Naive thymus-derived CD4-positive, alpha-beta T cell (primary cell): ENCODE measurements at regions of chr19 and their contacts with region 1.

Region 1: DNA sequence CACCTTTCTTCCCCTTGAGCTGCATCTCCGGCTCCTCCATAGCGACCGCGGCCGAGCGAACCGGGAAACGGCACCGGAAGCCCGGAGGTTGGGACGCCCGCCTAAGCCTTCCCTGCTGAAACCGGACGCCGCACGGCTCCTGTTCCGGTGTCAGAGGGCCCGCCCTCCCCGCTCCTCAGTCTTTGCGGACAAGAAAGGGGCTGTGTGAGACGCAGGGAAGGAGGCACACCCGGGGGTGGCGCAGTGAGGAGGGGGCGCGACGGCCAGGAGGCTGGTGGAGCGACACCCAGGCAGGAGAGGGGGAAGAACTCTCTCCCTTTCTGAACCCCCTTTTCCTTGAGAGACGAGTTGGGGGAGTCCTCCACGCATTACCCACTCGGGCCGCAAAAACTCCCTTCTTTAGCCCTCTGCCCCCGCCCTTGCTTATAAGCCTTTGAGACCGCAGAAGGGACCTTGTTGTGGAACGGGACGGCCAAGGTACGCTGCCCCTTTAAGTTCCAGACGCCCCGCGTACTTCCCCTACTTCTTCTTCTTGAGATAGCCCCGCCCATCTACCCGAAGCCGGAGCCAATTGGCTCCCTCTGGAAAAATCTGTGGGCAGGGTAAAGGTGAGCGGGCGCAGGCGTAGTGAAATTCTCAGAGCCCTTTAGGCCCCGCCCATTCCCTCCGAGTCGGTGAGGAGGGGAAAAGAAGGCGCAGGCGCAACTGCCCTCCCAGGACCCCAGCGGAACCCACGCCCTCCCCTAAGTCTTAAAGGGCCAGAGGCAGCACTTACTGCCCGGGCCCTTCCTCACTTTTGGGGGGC is at the starts of genes BORCS8 and RFXANK:
- DNase-seq: peak; percentile 89 to 99 (median 99)
- ATAC-seq: peak; percentile 95
- H3K4me3 ChIP-seq: peak within 1 kb of the TSS; percentile 100
- H3K4me3 Mint-ChIP-seq: peak within 1 kb of the TSS; percentile 94 to 100 (median 98)
- H3K27ac ChIP-seq: peak within 1 kb of the TSS; percentile 100
- H3K27ac Mint-ChIP-seq: peak within 1 kb of the TSS; percentile 99 to 100 (median 99)
- H3K4me1 ChIP-seq: peaks cover 13 to 22% of the 10 kb centered on the region in 2 donors
- H3K4me1 Mint-ChIP-seq: peaks cover 23 to 68% (median 45%) of the 10 kb centered on the region in 7 donors
- H3K27me3 ChIP-seq: no peaks in the 10 kb centered on the region
- H3K27me3 Mint-ChIP-seq: no peaks in the 10 kb centered on the region
- total RNA-seq, gene BORCS8: 22.6 to 48.2 (median 42.7) TPM
- total RNA-seq, gene RFXANK: 60.8 to 114 (median 74.9) TPM

Region 2: GRCh38 chr19:18919086-18919899 is 273.0 kb before region 1 on chr19 and contains the starts of genes COPE and DDX49:
- CTCF ChIA-PET with region 1: no interaction called
- POLR2A ChIA-PET with region 1: interaction called, 3 read pairs
- intact Hi-C with region 1: loop called (anchors 1 kb)
- DNase-seq: peak; percentile 85 to 99 (median 99)
- ATAC-seq: peak; percentile 97
- H3K4me3 ChIP-seq: peak within 1 kb of the TSS; percentile 85
- H3K4me3 Mint-ChIP-seq: peak within 1 kb of the TSS; percentile 71 to 100 (median 92)
- H3K27ac ChIP-seq: peak within 1 kb of the TSS; percentile 93
- H3K27ac Mint-ChIP-seq: peak within 1 kb of the TSS; percentile 76 to 98 (median 96)
- H3K4me1 ChIP-seq: peaks cover 18 to 21% of the 10 kb centered on the region in 2 donors
- H3K4me1 Mint-ChIP-seq: peaks cover 25 to 63% (median 36%) of the 10 kb centered on the region in 7 donors
- H3K27me3 ChIP-seq: no peaks in the 10 kb centered on the region
- H3K27me3 Mint-ChIP-seq: peaks cover 0 to 2% (median 0%) of the 10 kb centered on the region in 5 donors
- total RNA-seq, gene COPE: 124 to 283 (median 163) TPM
- total RNA-seq, gene DDX49: 36.4 to 63.2 (median 50.2) TPM

Region 3: DNA sequence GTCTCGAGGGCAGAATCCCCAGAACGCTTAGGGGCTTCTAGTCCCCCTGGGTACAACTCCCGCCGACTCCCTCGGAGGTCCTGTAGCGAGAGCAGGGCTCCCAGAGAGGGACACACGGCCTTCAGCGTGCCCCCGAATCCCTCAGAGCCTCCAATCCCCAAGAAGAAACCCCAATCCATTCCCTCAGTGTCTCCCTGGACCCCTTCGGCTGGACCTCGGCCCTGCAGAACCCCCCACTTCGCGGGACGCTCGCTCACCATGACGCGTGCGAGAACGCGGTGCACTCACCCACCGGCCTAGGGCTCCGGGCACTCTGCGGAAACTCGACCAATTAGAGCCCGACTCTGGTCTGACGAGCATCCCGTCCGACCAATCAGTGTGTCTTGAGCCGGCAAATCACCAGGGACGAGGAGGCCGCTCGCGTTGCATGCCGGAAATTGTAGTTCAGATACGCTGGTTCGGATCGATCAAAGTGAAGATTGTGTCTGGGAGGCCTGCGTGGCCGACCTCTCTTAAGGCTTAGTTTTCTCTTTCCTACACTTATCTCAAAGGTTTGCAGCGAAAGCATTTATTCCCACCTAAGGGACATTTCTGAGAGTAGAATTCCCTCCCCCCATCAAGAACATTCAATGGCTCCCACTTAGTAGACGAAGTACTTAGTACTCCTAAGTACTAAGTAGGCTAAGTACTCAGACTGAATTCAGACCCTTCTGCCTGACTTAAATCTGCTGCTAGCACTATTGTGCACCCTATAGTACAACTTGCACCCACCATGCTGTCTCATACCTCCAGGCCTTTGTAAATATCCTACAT is 53.9 kb before region 1 on chr19 and contains the start of gene TMEM161A:
- CTCF ChIA-PET with region 1: interaction called, 4 read pairs
- POLR2A ChIA-PET with region 1: interaction called, 3 read pairs
- intact Hi-C with region 1: loop called (anchors 1 kb)
- DNase-seq: peak; percentile 84 to 96 (median 93)
- ATAC-seq: peak; percentile 100
- H3K4me3 ChIP-seq: peak within 1 kb of the TSS; percentile 84
- H3K4me3 Mint-ChIP-seq: peak within 1 kb of the TSS; percentile 83 to 100 (median 98)
- H3K27ac ChIP-seq: peak within 1 kb of the TSS; percentile 90
- H3K27ac Mint-ChIP-seq: peak within 1 kb of the TSS; percentile 84 to 97 (median 94)
- H3K4me1 ChIP-seq: peaks cover 8 to 9% of the 10 kb centered on the region in 2 donors
- H3K4me1 Mint-ChIP-seq: peaks cover 20 to 41% (median 29%) of the 10 kb centered on the region in 7 donors
- H3K27me3 ChIP-seq: no peaks in the 10 kb centered on the region
- H3K27me3 Mint-ChIP-seq: no peaks in the 10 kb centered on the region
- total RNA-seq, gene TMEM161A: 15.8 to 32.7 (median 23.5) TPM

Region 4: DNA sequence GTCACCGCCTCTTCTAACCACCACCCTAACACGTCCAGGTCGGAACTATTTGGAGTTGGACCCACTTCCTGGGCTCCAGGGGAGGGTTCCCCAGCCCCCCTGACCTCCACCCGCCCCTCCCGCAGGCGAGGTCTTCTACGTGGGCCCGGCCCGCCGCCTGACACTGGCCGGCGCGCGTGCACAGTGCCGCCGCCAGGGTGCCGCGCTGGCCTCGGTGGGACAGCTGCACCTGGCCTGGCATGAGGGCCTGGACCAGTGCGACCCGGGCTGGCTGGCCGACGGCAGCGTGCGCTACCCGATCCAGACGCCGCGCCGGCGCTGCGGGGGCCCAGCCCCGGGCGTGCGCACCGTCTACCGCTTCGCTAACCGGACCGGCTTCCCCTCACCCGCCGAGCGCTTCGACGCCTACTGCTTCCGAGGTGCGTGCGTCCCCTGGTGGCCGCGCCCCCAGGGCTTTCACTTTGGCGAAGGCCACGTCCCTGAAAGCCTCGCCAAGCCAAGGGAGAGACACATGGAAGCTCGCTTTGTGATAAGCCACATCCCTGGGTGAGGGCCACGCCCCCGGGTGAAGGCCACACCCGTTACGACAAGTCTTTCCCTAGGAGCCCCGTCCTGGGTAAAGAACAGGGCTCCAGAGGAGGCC is 32.7 kb after region 1 on chr19:
- CTCF ChIA-PET with region 1: interaction called, 7 read pairs
- POLR2A ChIA-PET with region 1: interaction called, 4 read pairs
- intact Hi-C with region 1: loop called in 1 of 2 experiments (anchors 2 kb)
- DNase-seq: peak; percentile 63 to 79 (median 75)
- ATAC-seq: peak; percentile 94
- H3K4me3 ChIP-seq: peak overlapping the region; percentile 47
- H3K4me3 Mint-ChIP-seq: peak overlapping the region; percentile 45 to 85 (median 76)
- H3K27ac ChIP-seq: no peak overlapping the region
- H3K27ac Mint-ChIP-seq: peak overlapping the region in 1 of 9 donors; percentile 13
- H3K4me1 ChIP-seq: peaks cover 0 to 9% of the 10 kb centered on the region in 2 donors
- H3K4me1 Mint-ChIP-seq: peaks cover 0 to 4% (median 2%) of the 10 kb centered on the region in 7 donors
- H3K27me3 ChIP-seq: no peaks in the 10 kb centered on the region
- H3K27me3 Mint-ChIP-seq: peaks cover 0 to 20% (median 7%) of the 10 kb centered on the region in 5 donors

Region 5: GRCh38 chr19:19385108-19385899 is 193.0 kb after region 1 on chr19:
- CTCF ChIA-PET with region 1: no interaction called
- POLR2A ChIA-PET with region 1: no interaction called
- intact Hi-C with region 1: loop called in 1 of 2 experiments (anchors 5 kb)
- DNase-seq: peak; percentile 95 to 100 (median 99)
- ATAC-seq: peak; percentile 93
- H3K4me3 ChIP-seq: peak overlapping the region; percentile 81
- H3K4me3 Mint-ChIP-seq: peak overlapping the region; percentile 89 to 99 (median 94)
- H3K27ac ChIP-seq: peak overlapping the region; percentile 88
- H3K27ac Mint-ChIP-seq: peak overlapping the region; percentile 25 to 96 (median 93)
- H3K4me1 ChIP-seq: peaks cover 29 to 42% of the 10 kb centered on the region in 2 donors
- H3K4me1 Mint-ChIP-seq: peaks cover 36 to 46% (median 42%) of the 10 kb centered on the region in 7 donors
- H3K27me3 ChIP-seq: no peaks in the 10 kb centered on the region
- H3K27me3 Mint-ChIP-seq: no peaks in the 10 kb centered on the region

Region 6: GRCh38 chr19:19515764-19516519 is 323.7 kb after region 1 on chr19 and contains the start of gene NDUFA13:
- CTCF ChIA-PET with region 1: no interaction called
- POLR2A ChIA-PET with region 1: no interaction called
- intact Hi-C with region 1: loop called (anchors 1 kb)
- DNase-seq: peak; percentile 88 to 98 (median 92)
- ATAC-seq: peak; percentile 96
- H3K4me3 ChIP-seq: peak within 1 kb of the TSS; percentile 96
- H3K4me3 Mint-ChIP-seq: peak within 1 kb of the TSS; percentile 89 to 98 (median 95)
- H3K27ac ChIP-seq: peak within 1 kb of the TSS; percentile 83
- H3K27ac Mint-ChIP-seq: peak within 1 kb of the TSS; percentile 89 to 98 (median 96)
- H3K4me1 ChIP-seq: peaks cover 13 to 14% of the 10 kb centered on the region in 2 donors
- H3K4me1 Mint-ChIP-seq: peaks cover 16 to 42% (median 27%) of the 10 kb centered on the region in 7 donors
- H3K27me3 ChIP-seq: no peaks in the 10 kb centered on the region
- H3K27me3 Mint-ChIP-seq: no peaks in the 10 kb centered on the region
- total RNA-seq, gene NDUFA13: 172 to 362 (median 176) TPM

Region 7: DNA sequence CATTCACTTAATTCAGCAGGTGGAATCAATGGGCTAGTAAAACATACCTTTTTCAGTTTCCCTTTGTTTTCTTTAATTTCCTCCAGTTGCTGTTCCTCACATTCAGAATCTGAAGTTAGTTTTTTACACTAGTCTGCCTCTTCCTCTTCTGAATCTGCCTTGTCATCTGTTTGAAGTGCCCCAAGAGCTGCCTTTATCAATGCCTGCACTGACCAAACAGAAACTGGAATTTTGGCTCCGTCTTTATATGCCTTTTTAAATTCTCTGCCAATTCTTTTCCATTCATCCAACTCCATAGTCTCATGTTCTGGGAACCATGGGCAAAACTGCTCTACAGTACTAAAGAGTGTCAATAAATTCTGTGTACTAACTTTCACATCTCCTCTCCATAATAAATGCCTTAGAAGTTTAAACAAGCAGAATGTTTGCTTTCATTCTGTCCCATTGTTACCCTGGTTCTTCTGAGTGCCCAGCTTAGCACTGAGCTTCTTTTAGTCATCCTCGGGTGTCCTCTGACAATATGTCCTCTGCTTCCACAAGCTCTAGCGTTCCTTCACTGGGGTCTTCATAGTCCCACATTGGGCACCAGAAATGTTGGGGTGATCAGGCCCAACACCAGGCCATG is 1129.0 kb after region 1 on chr19:
- CTCF ChIA-PET with region 1: no interaction called
- POLR2A ChIA-PET with region 1: no interaction called
- intact Hi-C with region 1: no loop called
- DNase-seq: no peak
- ATAC-seq: no peak
- H3K4me3 ChIP-seq: no peak overlapping the region
- H3K4me3 Mint-ChIP-seq: no peak overlapping the region
- H3K27ac ChIP-seq: no peak overlapping the region
- H3K27ac Mint-ChIP-seq: no peak overlapping the region
- H3K4me1 ChIP-seq: no peaks in the 10 kb centered on the region
- H3K4me1 Mint-ChIP-seq: no peaks in the 10 kb centered on the region
- H3K27me3 ChIP-seq: no peaks in the 10 kb centered on the region
- H3K27me3 Mint-ChIP-seq: peaks cover 0 to 3% (median 0%) of the 10 kb centered on the region in 5 donors